ENCODE measurements at regions of chr6 and their contacts with region 1.

Region 1: GRCh38 chr6:139364302-139364981 is 10.0 kb downstream of the CITED2 start:
- DNase-seq: no peak
- ATAC-seq: peak; percentile 6 to 51 (median 40)
- H3K4me3 ChIP-seq: no peak overlapping the region
- H3K27ac ChIP-seq: no peak overlapping the region
- H3K4me1 ChIP-seq: peaks cover 0 to 31% (median 15%) of the 10 kb centered on the region in 12 donors
- H3K27me3 ChIP-seq: no peaks in the 10 kb centered on the region
- CTCF ChIP-seq: peak; percentile 64 to 92 (median 74)
- POLR2A ChIP-seq: no peak

Region 2: GRCh38 chr6:138817822-138818308 is 546.6 kb before region 1 on chr6:
- intact Hi-C with region 1: loop called in 9 of 10 experiments (anchors 5 to 10 kb)
- DNase-seq: no peak
- ATAC-seq: peak in 2 of 4 donors; percentile 9 to 26
- H3K4me3 ChIP-seq: no peak overlapping the region
- H3K27ac ChIP-seq: no peak overlapping the region
- H3K4me1 ChIP-seq: peaks cover 0 to 11% (median 5%) of the 10 kb centered on the region in 12 donors
- H3K27me3 ChIP-seq: no peaks in the 10 kb centered on the region
- CTCF ChIP-seq: no peak
- POLR2A ChIP-seq: no peak

Region 3: GRCh38 chr6:138923561-138923960 is 440.9 kb before region 1 on chr6:
- intact Hi-C with region 1: loop called in 1 of 10 experiments (anchors 10 kb)
- DNase-seq: no peak
- ATAC-seq: no peak
- H3K4me3 ChIP-seq: no peak overlapping the region
- H3K27ac ChIP-seq: no peak overlapping the region
- H3K4me1 ChIP-seq: no peaks in the 10 kb centered on the region
- H3K27me3 ChIP-seq: no peaks in the 10 kb centered on the region
- CTCF ChIP-seq: no peak
- POLR2A ChIP-seq: no peak

Region 4: GRCh38 chr6:139219271-139219729 is 145.1 kb before region 1 on chr6:
- intact Hi-C with region 1: loop called (anchors 1 to 5 kb)
- DNase-seq: peak; percentile 85 to 90 (median 86)
- ATAC-seq: peak; percentile 98 to 100 (median 99)
- H3K4me3 ChIP-seq: no peak overlapping the region
- H3K27ac ChIP-seq: peak overlapping the region; percentile 30 to 79 (median 62)
- H3K4me1 ChIP-seq: peaks cover 0 to 15% (median 6%) of the 10 kb centered on the region in 12 donors
- H3K27me3 ChIP-seq: no peaks in the 10 kb centered on the region
- CTCF ChIP-seq: peak; percentile 64 to 91 (median 82)
- POLR2A ChIP-seq: peak in 1 of 2 donors; percentile 62

Region 5: GRCh38 chr6:139291813-139292619 is 72.4 kb before region 1 on chr6 and contains the start of gene TXLNB:
- intact Hi-C with region 1: loop called in 3 of 10 experiments (anchors 2 to 5 kb)
- DNase-seq: peak; percentile 62 to 88 (median 80)
- ATAC-seq: peak; percentile 80 to 89 (median 84)
- H3K4me3 ChIP-seq: peak within 1 kb of the TSS; percentile 16 to 62 (median 47)
- H3K27ac ChIP-seq: peak within 1 kb of the TSS; percentile 78 to 94 (median 88)
- H3K4me1 ChIP-seq: peaks cover 3 to 57% (median 27%) of the 10 kb centered on the region in 12 donors
- H3K27me3 ChIP-seq: no peaks in the 10 kb centered on the region
- CTCF ChIP-seq: peak in 3 of 12 donors; percentile 9 to 30 (median 19)
- POLR2A ChIP-seq: no peak
- total RNA-seq, gene TXLNB: 80.6 to 170 (median 138) TPM